ENCODE measurements at regions of chr6 and their contacts with region 1.

Region 1: DNA sequence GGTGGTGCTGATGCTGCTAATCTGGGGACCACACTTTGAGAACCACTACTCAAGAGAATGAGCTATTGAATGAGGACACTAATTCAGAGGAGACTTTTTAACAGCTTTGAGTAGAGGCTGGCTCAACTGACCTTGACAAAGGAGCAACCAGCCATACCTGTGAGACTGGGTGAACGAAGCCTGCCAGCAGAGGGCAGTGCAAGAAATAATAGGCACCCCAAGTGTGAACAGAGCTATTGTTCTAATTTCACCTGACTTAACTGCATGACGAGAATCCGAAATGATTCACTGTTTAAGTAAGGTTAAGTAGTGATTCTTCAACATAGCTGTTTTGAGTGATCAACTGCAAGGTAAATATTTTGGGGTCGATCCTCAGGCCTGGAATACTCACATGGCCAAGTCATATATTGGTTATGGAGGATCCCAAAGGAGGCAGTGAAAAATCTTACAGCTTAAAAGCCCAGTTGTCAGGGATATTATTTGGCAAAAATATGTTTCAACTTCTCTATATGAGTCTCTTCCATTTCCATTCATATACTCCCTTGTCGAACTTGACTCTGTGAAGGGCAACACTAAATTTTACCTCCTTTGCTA is 550.5 kb upstream of the MARCKS start:
- DNase-seq: peak; percentile 54
- ATAC-seq: peak; percentile 85
- H3K4me3 Mint-ChIP-seq: no peak overlapping the region
- H3K27ac Mint-ChIP-seq: no peak overlapping the region
- H3K4me1 Mint-ChIP-seq: no peaks in the 10 kb centered on the region
- H3K27me3 Mint-ChIP-seq: no peaks in the 10 kb centered on the region
- CTCF ChIP-seq: peak; percentile 41

Region 2: GRCh38 chr6:113160306-113161017 is 146.2 kb before region 1 on chr6:
- CTCF ChIA-PET with region 1: no interaction called
- POLR2A ChIA-PET with region 1: no interaction called
- DNase-seq: no peak
- ATAC-seq: no peak
- H3K4me3 Mint-ChIP-seq: no peak overlapping the region
- H3K27ac Mint-ChIP-seq: no peak overlapping the region
- H3K4me1 Mint-ChIP-seq: no peaks in the 10 kb centered on the region
- H3K27me3 Mint-ChIP-seq: no peaks in the 10 kb centered on the region
- CTCF ChIP-seq: no peak

Region 3: DNA sequence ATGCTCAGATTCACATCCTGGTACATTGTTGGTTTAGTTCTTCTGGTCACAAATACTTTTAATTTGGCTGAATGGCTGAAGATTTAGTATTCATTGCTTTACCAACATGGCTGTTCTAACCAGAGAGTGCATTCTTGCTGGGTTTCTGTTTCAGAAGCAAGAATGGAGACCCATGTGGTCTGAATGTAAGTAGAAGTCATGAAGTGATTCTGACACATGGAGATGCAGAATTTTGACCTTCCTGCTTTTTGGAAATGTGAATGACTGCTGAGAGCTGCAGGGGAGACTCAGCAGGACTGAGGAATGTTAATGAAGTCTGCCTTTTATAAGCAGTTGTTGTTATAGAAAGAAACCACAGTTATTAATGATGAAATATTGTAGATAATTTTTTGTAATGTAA is 25.6 kb before region 1 on chr6:
- CTCF ChIA-PET with region 1: no interaction called
- POLR2A ChIA-PET with region 1: no interaction called
- DNase-seq: no peak
- ATAC-seq: peak; percentile 67
- H3K4me3 Mint-ChIP-seq: no peak overlapping the region
- H3K27ac Mint-ChIP-seq: peak overlapping the region; percentile 60
- H3K4me1 Mint-ChIP-seq: peaks cover 19% of the 10 kb centered on the region
- H3K27me3 Mint-ChIP-seq: no peaks in the 10 kb centered on the region
- CTCF ChIP-seq: no peak

Region 4: DNA sequence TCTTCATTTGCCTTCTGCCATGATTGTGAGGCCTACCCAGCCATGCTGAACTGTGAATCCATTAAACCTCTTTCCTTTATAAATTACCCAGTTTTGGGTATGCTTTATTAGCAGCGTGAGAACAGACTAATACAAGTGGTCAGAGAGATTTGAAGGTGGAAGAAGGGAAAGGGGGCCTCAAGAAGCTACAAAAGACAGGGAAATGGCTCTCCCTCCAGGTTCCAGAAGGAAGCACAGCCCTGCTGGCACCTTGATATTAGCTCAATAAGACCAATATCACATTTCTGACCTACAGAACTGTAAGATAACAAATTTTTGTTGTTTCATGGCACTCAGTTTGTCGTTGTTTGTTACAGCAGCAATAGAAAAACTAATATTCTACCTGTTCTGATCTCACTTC is 14.0 kb after region 1 on chr6:
- CTCF ChIA-PET with region 1: interaction called, 10 read pairs
- POLR2A ChIA-PET with region 1: no interaction called
- DNase-seq: no peak
- ATAC-seq: peak; percentile 51
- H3K4me3 Mint-ChIP-seq: no peak overlapping the region
- H3K27ac Mint-ChIP-seq: no peak overlapping the region
- H3K4me1 Mint-ChIP-seq: no peaks in the 10 kb centered on the region; the same call in 1 of the 2 replicates
- H3K27me3 Mint-ChIP-seq: no peaks in the 10 kb centered on the region; the same call in 1 of the 2 replicates
- CTCF ChIP-seq: no peak

Region 5: GRCh38 chr6:113879186-113880096 is 572.8 kb after region 1 on chr6:
- CTCF ChIA-PET with region 1: interaction called, 16 read pairs
- POLR2A ChIA-PET with region 1: no interaction called
- DNase-seq: peak; percentile 33
- ATAC-seq: peak; percentile 100
- H3K4me3 Mint-ChIP-seq: no peak overlapping the region
- H3K27ac Mint-ChIP-seq: no peak overlapping the region
- H3K4me1 Mint-ChIP-seq: 0 out of 2 replicates have a peak, but pooled peaks cover 4% of the 10 kb centered on the region
- H3K27me3 Mint-ChIP-seq: no peaks in the 10 kb centered on the region
- CTCF ChIP-seq: peak; percentile 22; the same call in 1 of the 2 replicates

Measured in WTC11 (cell line).